ENCODE measurements at regions of chr6 and their contacts with region 1.

Region 1: DNA sequence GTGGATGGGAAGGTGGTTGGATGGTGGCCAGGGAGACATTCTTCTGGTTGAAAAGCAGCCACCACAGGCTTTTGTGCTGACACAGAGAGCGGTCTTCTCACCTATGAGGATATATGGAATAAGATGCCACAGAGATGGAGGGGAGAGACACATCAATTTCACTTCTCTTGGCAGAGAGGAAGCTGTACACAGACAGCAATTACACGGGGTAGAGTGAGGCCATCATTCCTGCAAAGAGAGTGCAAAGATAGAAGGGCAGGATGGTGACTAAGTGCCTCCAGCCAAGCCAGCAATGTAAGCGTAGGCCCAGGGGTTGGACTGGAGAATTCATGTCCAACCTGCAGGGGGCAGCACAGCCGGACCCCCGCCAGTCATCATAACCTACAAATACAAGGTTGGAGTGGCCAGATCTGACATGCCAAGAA is 56.4 kb downstream of the NRN1 start:
- DNase-seq: peak in 1 of 9 donors; percentile 27
- ATAC-seq: peak; percentile 51
- H3K4me3 ChIP-seq: no peak overlapping the region
- H3K4me3 Mint-ChIP-seq: no peak overlapping the region
- H3K27ac ChIP-seq: no peak overlapping the region
- H3K27ac Mint-ChIP-seq: no peak overlapping the region
- H3K4me1 ChIP-seq: no peaks in the 10 kb centered on the region
- H3K4me1 Mint-ChIP-seq: no peaks in the 10 kb centered on the region
- H3K27me3 ChIP-seq: no peaks in the 10 kb centered on the region
- H3K27me3 Mint-ChIP-seq: peaks cover 0 to 55% (median 4%) of the 10 kb centered on the region in 5 donors

Region 2: GRCh38 chr6:5995949-5996713 is 45.8 kb after region 1 on chr6:
- CTCF ChIA-PET with region 1: no interaction called
- POLR2A ChIA-PET with region 1: no interaction called
- intact Hi-C with region 1: loop called in 1 of 2 experiments (anchors 5 kb)
- DNase-seq: peak in 1 of 9 donors; percentile 29
- ATAC-seq: no peak
- H3K4me3 ChIP-seq: peak overlapping the region; percentile 84
- H3K4me3 Mint-ChIP-seq: peak overlapping the region; percentile 87 to 93 (median 90)
- H3K27ac ChIP-seq: no peak overlapping the region
- H3K27ac Mint-ChIP-seq: peak overlapping the region in 8 of 9 donors; percentile 15 to 86 (median 64)
- H3K4me1 ChIP-seq: peaks cover 27 to 53% of the 10 kb centered on the region in 2 donors
- H3K4me1 Mint-ChIP-seq: peaks cover 48 to 69% (median 58%) of the 10 kb centered on the region in 7 donors
- H3K27me3 ChIP-seq: peaks cover 44 to 80% of the 10 kb centered on the region in 2 donors
- H3K27me3 Mint-ChIP-seq: peaks cover 86 to 95% (median 93%) of the 10 kb centered on the region in 5 donors